CD8-positive, alpha-beta T cell (primary cell): ENCODE measurements at regions of chr15 and their contacts with region 1.

Region 1: DNA sequence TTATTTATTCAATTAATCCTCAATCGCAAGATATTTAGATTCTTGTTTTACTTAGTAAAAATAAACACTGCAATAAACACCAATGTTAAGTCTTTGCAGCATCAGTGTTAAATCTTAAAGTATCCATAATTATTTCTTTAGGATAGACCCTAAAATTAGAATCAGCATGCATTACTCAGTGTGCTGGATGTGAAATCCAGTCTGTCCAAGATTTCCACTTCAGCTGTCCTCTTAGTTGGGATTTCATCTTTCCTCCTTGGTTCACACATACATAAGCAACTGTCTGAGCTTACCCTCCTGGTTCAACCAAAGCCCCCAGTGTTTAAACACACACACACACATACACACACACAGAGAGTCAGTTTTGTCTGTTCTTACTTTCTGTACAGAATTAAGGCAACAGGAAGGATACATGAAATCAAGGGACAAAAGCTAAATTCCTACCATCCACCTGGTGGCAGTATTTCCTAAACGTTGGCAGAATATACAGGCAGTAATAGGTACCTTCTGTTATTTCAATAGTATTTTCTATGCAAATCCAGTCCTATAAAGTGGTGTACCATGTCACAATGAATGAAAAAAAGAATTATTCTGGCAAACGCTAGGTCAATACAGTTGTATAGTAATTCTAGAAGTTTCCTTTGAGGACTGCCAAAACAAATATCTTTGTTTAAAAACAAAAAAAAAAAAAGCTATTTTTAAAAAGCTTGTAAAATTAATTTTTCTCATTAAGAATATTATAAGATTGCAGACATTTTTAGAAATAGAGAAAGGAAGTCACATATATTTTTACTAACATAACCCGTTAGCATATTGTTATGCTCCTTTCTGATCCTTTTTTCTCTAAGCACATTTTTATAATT is 27.3 kb upstream of the DMXL2 start:
- DNase-seq: peak in 7 of 9 experiments; percentile 26 to 85 (median 48)
- ATAC-seq: peak; percentile 85
- H3K4me3 ChIP-seq: no peak overlapping the region
- H3K4me3 Mint-ChIP-seq: no peak overlapping the region
- H3K27ac ChIP-seq: no peak overlapping the region
- H3K27ac Mint-ChIP-seq: no peak overlapping the region
- H3K4me1 ChIP-seq: no peaks in the 10 kb centered on the region
- H3K4me1 Mint-ChIP-seq: no peaks in the 10 kb centered on the region
- H3K27me3 ChIP-seq: no peaks in the 10 kb centered on the region
- H3K27me3 Mint-ChIP-seq: peaks cover 3% of the 10 kb centered on the region
- CTCF ChIP-seq: peak; percentile 92

Region 2: GRCh38 chr15:51460796-51461195 is 189.1 kb before region 1 on chr15:
- CTCF ChIA-PET with region 1: no interaction called
- POLR2A ChIA-PET with region 1: no interaction called
- intact Hi-C with region 1: no loop called
- DNase-seq: no peak
- ATAC-seq: no peak
- H3K4me3 ChIP-seq: no peak overlapping the region
- H3K4me3 Mint-ChIP-seq: no peak overlapping the region
- H3K27ac ChIP-seq: no peak overlapping the region
- H3K27ac Mint-ChIP-seq: no peak overlapping the region
- H3K4me1 ChIP-seq: no peaks in the 10 kb centered on the region
- H3K4me1 Mint-ChIP-seq: no peaks in the 10 kb centered on the region
- H3K27me3 ChIP-seq: no peaks in the 10 kb centered on the region
- H3K27me3 Mint-ChIP-seq: no peaks in the 10 kb centered on the region
- CTCF ChIP-seq: no peak

Region 3: GRCh38 chr15:51782357-51782896 is 132.5 kb after region 1 on chr15:
- CTCF ChIA-PET with region 1: interaction called, 314 read pairs
- POLR2A ChIA-PET with region 1: interaction called, 3 read pairs
- intact Hi-C with region 1: no loop called
- DNase-seq: no peak
- ATAC-seq: no peak
- H3K4me3 ChIP-seq: no peak overlapping the region
- H3K4me3 Mint-ChIP-seq: no peak overlapping the region
- H3K27ac ChIP-seq: no peak overlapping the region
- H3K27ac Mint-ChIP-seq: no peak overlapping the region
- H3K4me1 ChIP-seq: no peaks in the 10 kb centered on the region
- H3K4me1 Mint-ChIP-seq: no peaks in the 10 kb centered on the region
- H3K27me3 ChIP-seq: no peaks in the 10 kb centered on the region
- H3K27me3 Mint-ChIP-seq: no peaks in the 10 kb centered on the region
- CTCF ChIP-seq: no peak

Region 4: DNA sequence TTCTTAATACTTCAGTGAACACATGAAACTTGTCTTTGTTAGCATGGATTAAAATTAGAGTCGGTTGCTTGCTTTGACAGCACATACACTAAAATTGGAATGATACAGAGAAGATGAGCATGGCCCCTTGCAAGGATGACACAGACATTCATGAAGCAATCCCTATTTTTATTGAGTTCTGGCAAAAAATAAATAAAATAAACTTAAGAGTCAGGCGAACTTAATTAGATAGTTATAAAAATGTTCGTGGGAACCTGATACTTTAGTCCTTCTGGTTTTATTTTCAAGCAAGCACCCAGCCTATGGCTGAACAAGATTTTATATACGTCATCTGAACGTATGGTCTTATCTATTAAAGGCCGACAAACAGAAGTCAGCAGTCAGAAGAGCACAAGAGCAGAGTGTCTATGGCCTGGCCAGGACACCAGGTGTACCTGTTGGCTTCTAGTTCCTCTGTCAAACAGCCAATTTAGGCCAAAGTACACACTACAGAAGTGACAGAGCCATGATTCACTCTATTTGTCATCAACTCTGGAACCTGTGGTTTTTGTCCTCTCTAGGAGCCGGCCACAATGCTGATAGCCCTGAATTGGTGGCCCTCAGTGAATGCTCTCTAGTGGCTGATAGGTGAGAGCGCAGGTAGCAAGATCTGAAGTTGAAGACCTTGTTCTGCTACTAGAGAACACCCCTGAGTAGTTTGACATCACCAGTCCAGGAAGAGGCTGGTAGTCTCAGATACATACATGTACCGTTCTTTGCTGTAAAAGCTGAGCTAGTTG is 257.4 kb after region 1 on chr15:
- CTCF ChIA-PET with region 1: no interaction called
- POLR2A ChIA-PET with region 1: no interaction called
- intact Hi-C with region 1: loop called in 1 of 2 experiments (anchors 5 kb)
- DNase-seq: no peak
- ATAC-seq: no peak
- H3K4me3 ChIP-seq: no peak overlapping the region
- H3K4me3 Mint-ChIP-seq: no peak overlapping the region
- H3K27ac ChIP-seq: no peak overlapping the region
- H3K27ac Mint-ChIP-seq: no peak overlapping the region
- H3K4me1 ChIP-seq: no peaks in the 10 kb centered on the region
- H3K4me1 Mint-ChIP-seq: no peaks in the 10 kb centered on the region
- H3K27me3 ChIP-seq: no peaks in the 10 kb centered on the region
- H3K27me3 Mint-ChIP-seq: no peaks in the 10 kb centered on the region
- CTCF ChIP-seq: no peak